ENCODE measurements at regions of chr15 and their contacts with region 1.

Region 1: GRCh38 chr15:81265944-81266775 is 57.8 kb downstream of the STARD5 start:
- DNase-seq: peak; percentile 80
- H3K4me3 ChIP-seq: no peak overlapping the region
- H3K27ac ChIP-seq: no peak overlapping the region
- H3K4me1 ChIP-seq: peaks cover 5% of the 10 kb centered on the region
- H3K27me3 ChIP-seq: peaks cover 0 to 2% of the 10 kb centered on the region in 2 experiments
- CTCF ChIP-seq: peak; percentile 93 to 94
- POLR2A ChIP-seq: no peak

Region 2: GRCh38 chr15:80776420-80777045 is 489.6 kb before region 1 on chr15:
- CTCF ChIA-PET with region 1: interaction called, 68 read pairs
- POLR2A ChIA-PET with region 1: no interaction called
- dilution Hi-C with region 1: no loop called
- intact Hi-C with region 1: loop called (anchors 1 kb)
- DNase-seq: peak; percentile 81
- H3K4me3 ChIP-seq: no peak overlapping the region
- H3K27ac ChIP-seq: no peak overlapping the region
- H3K4me1 ChIP-seq: peaks cover 18% of the 10 kb centered on the region
- H3K27me3 ChIP-seq: peaks cover 13 to 17% of the 10 kb centered on the region in 2 experiments
- CTCF ChIP-seq: peak; percentile 88
- POLR2A ChIP-seq: no peak

Region 3: DNA sequence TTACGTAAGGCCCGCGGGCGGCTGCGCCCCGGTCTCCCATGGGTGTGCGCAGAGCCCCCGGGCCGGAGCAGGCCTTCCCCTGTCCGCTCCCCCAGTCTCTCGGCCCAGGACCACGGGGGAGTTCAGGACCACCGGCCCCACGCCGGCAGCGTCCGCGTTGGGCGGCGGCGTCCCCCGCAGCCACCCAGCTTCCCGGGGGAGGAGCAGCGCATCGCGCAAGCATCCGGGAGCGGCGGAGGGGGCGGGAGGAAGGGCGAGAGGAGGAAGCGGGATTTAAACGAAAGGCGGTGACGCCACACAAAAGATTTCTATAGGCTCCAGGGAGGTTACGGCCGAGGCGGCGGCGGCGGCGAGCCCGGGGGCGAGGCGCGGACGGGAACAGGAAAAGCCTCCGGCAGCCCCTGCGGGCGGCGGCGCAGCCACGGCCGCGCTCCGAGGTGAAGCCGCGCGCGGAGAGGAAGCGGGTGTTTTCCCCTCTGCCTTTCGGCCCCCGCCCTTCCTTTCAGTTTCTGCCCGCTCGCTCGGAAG is 265.5 kb before region 1 on chr15 and contains the start of gene TLNRD1:
- CTCF ChIA-PET with region 1: interaction called, 52 read pairs
- POLR2A ChIA-PET with region 1: no interaction called
- dilution Hi-C with region 1: no loop called
- intact Hi-C with region 1: loop called (anchors 1 kb)
- DNase-seq: peak; percentile 92
- H3K4me3 ChIP-seq: peak within 1 kb of the TSS; percentile 73 to 87 (median 75)
- H3K27ac ChIP-seq: peak within 1 kb of the TSS; percentile 85
- H3K4me1 ChIP-seq: peaks cover 35% of the 10 kb centered on the region
- H3K27me3 ChIP-seq: no peaks in the 10 kb centered on the region
- CTCF ChIP-seq: no peak
- POLR2A ChIP-seq: peak; percentile 91
- total RNA-seq, gene TLNRD1: 33.0 and 33.2 TPM in 2 replicates

Region 4: DNA sequence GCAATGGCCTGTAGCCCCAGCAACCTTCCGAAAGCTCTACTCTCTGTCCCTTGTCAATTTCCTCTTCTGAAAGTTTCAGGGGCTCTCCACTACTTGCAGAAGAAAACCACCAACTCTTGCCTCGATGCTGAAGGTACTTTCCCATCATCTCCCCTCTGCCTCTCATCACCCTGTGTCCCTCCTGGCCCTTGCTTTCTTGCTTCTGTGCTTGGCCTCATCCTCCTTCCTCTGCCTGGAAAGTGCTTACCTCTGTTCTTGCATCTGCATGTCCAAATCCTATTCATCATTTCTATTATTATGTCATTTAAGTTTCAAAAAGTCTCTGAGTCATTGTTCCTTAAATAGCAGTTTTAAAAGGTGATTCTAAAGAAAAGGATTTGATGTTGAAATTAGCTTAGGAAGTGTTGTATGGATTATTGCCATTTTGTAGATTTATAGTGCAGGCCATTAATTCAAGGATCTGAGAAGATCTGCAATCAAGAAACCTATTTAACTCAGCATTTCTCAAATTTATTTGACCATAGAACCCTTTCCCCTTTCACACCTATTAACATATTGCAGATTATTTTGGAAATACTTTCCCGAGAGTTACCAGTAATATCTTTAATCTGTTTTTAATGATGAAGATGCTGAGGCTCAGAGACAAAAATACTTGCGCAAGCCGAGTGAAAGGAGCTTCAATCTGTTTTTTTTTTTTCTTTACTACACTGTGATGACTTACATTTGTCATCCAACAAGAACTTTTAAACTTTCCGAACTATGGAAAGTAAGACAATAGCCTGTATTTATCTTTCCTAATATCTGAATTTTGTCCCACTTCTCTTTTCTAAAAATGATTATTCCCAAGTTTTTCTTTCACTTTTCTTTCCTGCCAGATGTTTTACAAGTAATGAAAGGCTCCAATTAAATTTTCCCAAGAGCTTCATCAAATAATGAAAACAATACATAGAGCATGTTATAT is 154.4 kb before region 1 on chr15:
- CTCF ChIA-PET with region 1: interaction called, 271 read pairs
- POLR2A ChIA-PET with region 1: no interaction called
- dilution Hi-C with region 1: no loop called
- intact Hi-C with region 1: loop called (anchors 1 kb)
- DNase-seq: no peak
- H3K4me3 ChIP-seq: no peak overlapping the region
- H3K27ac ChIP-seq: no peak overlapping the region
- H3K4me1 ChIP-seq: peaks cover 16% of the 10 kb centered on the region
- H3K27me3 ChIP-seq: peaks cover 0 to 2% of the 10 kb centered on the region in 2 experiments
- CTCF ChIP-seq: no peak
- POLR2A ChIP-seq: no peak

Region 5: GRCh38 chr15:81163961-81164800 is 102.0 kb before region 1 on chr15:
- CTCF ChIA-PET with region 1: interaction called, 472 read pairs
- POLR2A ChIA-PET with region 1: no interaction called
- dilution Hi-C with region 1: no loop called
- intact Hi-C with region 1: no loop called
- DNase-seq: no peak
- H3K4me3 ChIP-seq: no peak overlapping the region
- H3K27ac ChIP-seq: no peak overlapping the region
- H3K4me1 ChIP-seq: no peaks in the 10 kb centered on the region
- H3K27me3 ChIP-seq: peaks cover 2% of the 10 kb centered on the region in 2 experiments
- CTCF ChIP-seq: peak in 1 of 2 donors; percentile 11
- POLR2A ChIP-seq: no peak

Region 6: DNA sequence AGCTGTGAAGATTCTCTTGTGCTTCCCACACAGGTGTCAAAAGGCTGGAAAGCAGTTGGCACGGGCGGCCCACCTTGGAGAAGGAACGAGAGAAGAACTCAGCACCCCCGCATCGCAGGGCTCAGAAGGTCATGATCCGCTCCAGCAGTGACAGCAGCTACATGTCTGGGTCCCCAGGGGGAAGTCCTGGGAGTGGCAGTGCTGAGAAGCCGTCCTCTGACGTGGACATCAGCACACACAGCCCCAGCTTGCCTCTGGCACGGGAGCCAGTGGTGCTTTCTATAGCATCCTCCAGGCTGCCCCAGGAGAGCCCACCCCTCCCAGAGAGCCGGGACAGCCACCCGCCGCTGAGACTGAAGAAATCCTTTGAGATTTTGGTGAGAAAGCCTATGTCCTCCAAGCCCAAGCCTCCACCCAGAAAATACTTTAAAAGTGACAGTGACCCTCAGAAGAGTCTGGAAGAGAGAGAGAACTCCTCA is 26.4 kb after region 1 on chr15:
- CTCF ChIA-PET with region 1: interaction called, 14 read pairs
- POLR2A ChIA-PET with region 1: no interaction called
- dilution Hi-C with region 1: no loop called
- intact Hi-C with region 1: no loop called
- DNase-seq: no peak
- H3K4me3 ChIP-seq: no peak overlapping the region
- H3K27ac ChIP-seq: no peak overlapping the region
- H3K4me1 ChIP-seq: peaks cover 8% of the 10 kb centered on the region
- H3K27me3 ChIP-seq: peaks cover 0 to 5% of the 10 kb centered on the region in 2 experiments
- CTCF ChIP-seq: no peak
- POLR2A ChIP-seq: no peak

Region 7: DNA sequence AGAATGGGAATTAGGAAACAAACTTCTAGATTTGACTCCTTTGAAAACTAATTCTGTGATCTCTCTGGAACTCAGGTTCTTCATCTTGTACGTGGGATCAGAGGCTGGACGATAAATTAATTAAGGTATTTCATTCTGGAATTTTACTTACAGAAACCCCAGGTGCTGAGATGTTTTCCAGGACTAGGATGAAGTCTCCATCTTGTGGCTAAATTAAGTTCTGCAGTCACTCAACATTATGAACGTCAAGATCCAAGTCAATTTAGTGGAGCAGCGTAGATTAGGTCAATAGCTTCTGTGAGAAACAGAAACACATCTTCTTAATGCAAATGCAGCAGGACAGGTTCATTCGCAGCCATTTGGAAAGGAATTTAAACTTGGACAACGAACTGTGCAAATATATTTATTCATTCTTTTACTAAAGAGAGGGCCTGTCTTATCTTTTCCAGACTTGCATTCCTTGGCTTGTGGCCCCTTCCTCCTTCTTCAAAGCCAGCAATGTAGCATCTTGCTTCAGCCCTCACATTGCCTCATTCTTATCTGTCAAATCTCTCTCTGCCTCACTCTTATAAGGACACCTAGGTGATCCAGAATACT is 134.6 kb after region 1 on chr15:
- CTCF ChIA-PET with region 1: interaction called, 142 read pairs
- POLR2A ChIA-PET with region 1: no interaction called
- dilution Hi-C with region 1: no loop called
- intact Hi-C with region 1: no loop called
- DNase-seq: peak; percentile 71
- H3K4me3 ChIP-seq: no peak overlapping the region
- H3K27ac ChIP-seq: no peak overlapping the region
- H3K4me1 ChIP-seq: no peaks in the 10 kb centered on the region
- H3K27me3 ChIP-seq: peaks cover 3% of the 10 kb centered on the region in 2 experiments
- CTCF ChIP-seq: peak; percentile 49 to 54
- POLR2A ChIP-seq: no peak